Body of pancreas (tissue), 4 donors: ENCODE measurements at regions of chr17 and their contacts with region 1.

Region 1: DNA sequence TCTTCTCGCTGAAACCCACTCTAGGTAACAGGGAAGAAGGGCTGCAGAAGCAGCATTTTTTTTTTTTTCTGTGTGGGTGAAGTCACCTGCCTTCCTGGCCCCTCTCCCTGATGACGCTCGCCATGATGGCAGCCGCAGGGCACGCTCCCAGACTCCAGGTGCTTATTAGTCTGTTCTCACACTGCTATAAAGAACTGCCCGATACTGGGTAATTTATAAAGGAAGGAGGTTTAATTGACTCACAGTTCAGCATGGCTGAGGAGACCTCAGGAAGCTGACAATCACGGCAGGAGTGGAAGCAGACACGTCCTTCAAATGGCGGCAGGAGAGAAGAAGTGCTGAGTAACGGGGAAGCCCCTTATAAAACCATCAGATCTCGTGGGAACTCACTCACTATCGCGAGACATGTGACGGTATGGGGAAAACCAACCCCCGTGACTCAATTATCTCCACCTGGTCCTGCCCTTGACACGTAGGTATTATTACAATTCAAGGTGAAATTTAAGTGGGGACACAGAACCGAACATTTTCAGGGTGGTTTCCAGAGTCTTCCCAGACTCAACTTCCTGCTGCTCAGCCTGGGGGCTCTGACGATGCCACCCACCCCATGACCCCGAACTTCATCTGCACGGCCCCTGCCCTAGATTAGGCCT is 34.9 kb upstream of the NLRP1 start:
- DNase-seq: no peak
- ATAC-seq: no peak
- H3K4me3 ChIP-seq: no peak overlapping the region
- H3K27ac ChIP-seq: no peak overlapping the region
- H3K4me1 ChIP-seq: no peaks in the 10 kb centered on the region
- H3K27me3 ChIP-seq: no peaks in the 10 kb centered on the region
- CTCF ChIP-seq: no peak
- POLR2A ChIP-seq: no peak

Region 2: DNA sequence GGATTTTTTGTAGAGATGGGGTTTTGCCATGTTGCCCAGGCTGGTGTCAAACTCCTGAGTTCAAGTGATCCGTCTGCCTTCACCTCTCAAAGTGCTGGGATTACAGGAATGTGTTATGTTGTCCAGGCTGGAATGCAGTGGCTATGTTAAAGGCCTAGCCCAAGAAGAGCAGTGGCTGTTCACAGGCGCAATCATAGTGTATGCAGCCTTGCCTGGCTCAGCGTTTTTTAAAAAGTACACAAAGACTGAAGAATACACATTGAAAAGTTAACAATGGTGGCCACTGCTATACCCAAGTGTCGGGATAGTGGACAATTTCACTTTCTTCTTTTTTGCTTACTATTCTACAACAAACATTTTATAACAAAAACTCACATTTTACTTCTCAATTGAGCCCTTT is 140.2 kb before region 1 on chr17:
- intact Hi-C with region 1: no loop called
- DNase-seq: no peak
- ATAC-seq: no peak
- H3K4me3 ChIP-seq: no peak overlapping the region
- H3K27ac ChIP-seq: no peak overlapping the region
- H3K4me1 ChIP-seq: peaks cover 22% of the 10 kb centered on the region
- H3K27me3 ChIP-seq: no peaks in the 10 kb centered on the region
- CTCF ChIP-seq: no peak
- POLR2A ChIP-seq: no peak

Region 3: DNA sequence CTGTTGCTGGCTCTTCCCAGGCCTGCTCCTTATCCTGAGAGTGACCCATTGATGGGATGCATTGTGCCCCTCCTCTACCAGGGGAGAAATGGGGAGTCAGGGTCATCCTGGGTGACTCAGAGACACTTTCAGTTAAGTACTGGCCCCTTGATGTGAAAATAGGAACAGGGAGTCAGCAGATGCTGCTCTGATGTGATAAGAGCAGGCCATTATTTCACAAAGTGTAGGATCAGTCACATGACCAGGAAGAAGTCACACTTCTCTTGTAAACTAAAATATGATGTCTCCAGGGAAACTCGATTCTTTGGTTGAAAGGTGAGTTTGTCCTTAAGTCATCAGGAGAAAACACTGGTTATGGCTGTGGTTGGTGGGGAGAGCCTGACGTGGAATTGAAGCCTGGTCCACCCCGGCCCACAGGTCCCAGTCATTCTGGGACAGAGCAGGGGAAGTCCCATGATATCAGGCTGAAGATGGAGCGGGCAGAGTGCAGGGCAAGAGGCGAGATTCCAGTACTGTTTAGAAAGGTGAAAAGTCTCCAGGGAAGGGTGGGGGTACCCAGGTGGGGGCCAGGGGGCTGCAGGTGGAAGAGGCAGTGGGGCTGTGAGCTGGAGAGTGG is 53.7 kb after region 1 on chr17:
- intact Hi-C with region 1: loop called (anchors 10 kb)
- DNase-seq: no peak
- ATAC-seq: no peak
- H3K4me3 ChIP-seq: no peak overlapping the region
- H3K27ac ChIP-seq: no peak overlapping the region
- H3K4me1 ChIP-seq: no peaks in the 10 kb centered on the region
- H3K27me3 ChIP-seq: no peaks in the 10 kb centered on the region
- CTCF ChIP-seq: no peak
- POLR2A ChIP-seq: no peak